CD8-positive, alpha-beta T cell (primary cell): ENCODE measurements at regions of chr1 and their contacts with region 1.

Region 1: DNA sequence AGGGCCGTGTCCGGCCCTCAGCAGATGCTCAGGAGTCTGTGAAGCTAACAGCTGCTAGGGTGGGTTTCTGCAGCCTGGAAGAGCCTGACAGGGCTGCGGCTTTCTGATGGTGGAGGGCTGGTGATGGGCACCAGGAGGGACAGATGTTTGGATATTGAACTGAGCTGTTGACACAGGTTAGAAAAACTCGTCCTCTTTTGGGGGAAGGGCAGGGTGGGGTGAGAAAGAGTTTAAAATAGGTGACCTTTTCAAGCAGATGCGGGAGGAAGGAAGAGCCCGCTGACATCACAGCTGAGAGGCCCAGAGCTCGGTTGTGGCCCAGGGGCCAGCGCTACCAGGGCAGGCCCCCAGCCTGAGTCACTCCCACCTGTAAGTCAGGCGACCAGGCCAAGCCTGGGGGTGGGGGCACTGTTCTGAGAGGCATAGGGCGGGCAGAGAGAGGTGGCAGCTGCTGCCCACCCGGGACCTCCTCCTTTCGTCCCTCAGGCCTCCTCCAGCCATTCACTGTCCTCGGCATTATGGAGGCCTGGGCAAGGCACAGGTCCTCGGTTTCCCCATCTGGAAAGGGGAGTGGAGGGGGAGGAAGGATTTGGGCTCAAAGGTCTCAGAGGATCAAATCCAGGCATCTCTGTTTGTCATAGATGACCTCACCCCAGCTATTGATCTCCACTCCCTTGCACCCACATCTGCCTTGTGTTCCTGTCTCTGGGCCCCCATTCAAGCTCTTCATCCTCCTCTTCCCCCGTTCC is 32.3 kb upstream of the ID3 start:
- DNase-seq: peak in 5 of 9 experiments; percentile 34 to 63 (median 46)
- ATAC-seq: peak; percentile 82
- H3K4me3 ChIP-seq: no peak overlapping the region
- H3K4me3 Mint-ChIP-seq: peak overlapping the region; percentile 42
- H3K27ac ChIP-seq: peak overlapping the region in 1 of 2 experiments; percentile 41
- H3K27ac Mint-ChIP-seq: peak overlapping the region; percentile 83
- H3K4me1 ChIP-seq: peaks cover 62% of the 10 kb centered on the region
- H3K4me1 Mint-ChIP-seq: peaks cover 64% of the 10 kb centered on the region
- H3K27me3 ChIP-seq: no peaks in the 10 kb centered on the region
- H3K27me3 Mint-ChIP-seq: no peaks in the 10 kb centered on the region
- CTCF ChIP-seq: no peak

Region 2: GRCh38 chr1:23577056-23578004 is 14.3 kb before region 1 on chr1:
- CTCF ChIA-PET with region 1: interaction called, 4 read pairs
- POLR2A ChIA-PET with region 1: interaction called, 20 read pairs
- intact Hi-C with region 1: loop called in 1 of 2 experiments (anchors 2 kb)
- DNase-seq: no peak
- ATAC-seq: peak; percentile 74
- H3K4me3 ChIP-seq: no peak overlapping the region
- H3K4me3 Mint-ChIP-seq: peak overlapping the region; percentile 50
- H3K27ac ChIP-seq: peak overlapping the region; percentile 7 to 10
- H3K27ac Mint-ChIP-seq: peak overlapping the region; percentile 87
- H3K4me1 ChIP-seq: peaks cover 60% of the 10 kb centered on the region
- H3K4me1 Mint-ChIP-seq: peaks cover 62% of the 10 kb centered on the region
- H3K27me3 ChIP-seq: no peaks in the 10 kb centered on the region
- H3K27me3 Mint-ChIP-seq: no peaks in the 10 kb centered on the region
- CTCF ChIP-seq: no peak

Region 3: GRCh38 chr1:23613191-23614031 is 21.8 kb after region 1 on chr1:
- CTCF ChIA-PET with region 1: no interaction called
- POLR2A ChIA-PET with region 1: interaction called, 86 read pairs
- intact Hi-C with region 1: no loop called
- DNase-seq: peak in 7 of 9 experiments; percentile 33 to 78 (median 61)
- ATAC-seq: peak; percentile 61
- H3K4me3 ChIP-seq: peak overlapping the region in 1 of 2 experiments; percentile 8
- H3K4me3 Mint-ChIP-seq: peak overlapping the region; percentile 54
- H3K27ac ChIP-seq: peak overlapping the region; percentile 40 to 72
- H3K27ac Mint-ChIP-seq: peak overlapping the region; percentile 90
- H3K4me1 ChIP-seq: peaks cover 65% of the 10 kb centered on the region
- H3K4me1 Mint-ChIP-seq: peaks cover 83% of the 10 kb centered on the region
- H3K27me3 ChIP-seq: no peaks in the 10 kb centered on the region
- H3K27me3 Mint-ChIP-seq: no peaks in the 10 kb centered on the region
- CTCF ChIP-seq: no peak

Region 4: GRCh38 chr1:23619299-23620188 is 27.9 kb after region 1 on chr1:
- CTCF ChIA-PET with region 1: no interaction called
- POLR2A ChIA-PET with region 1: interaction called, 86 read pairs
- intact Hi-C with region 1: no loop called
- DNase-seq: peak; percentile 66 to 92 (median 85)
- ATAC-seq: peak; percentile 84
- H3K4me3 ChIP-seq: peak overlapping the region; percentile 44 to 50
- H3K4me3 Mint-ChIP-seq: peak overlapping the region; percentile 72
- H3K27ac ChIP-seq: peak overlapping the region; percentile 62 to 68
- H3K27ac Mint-ChIP-seq: peak overlapping the region; percentile 95
- H3K4me1 ChIP-seq: peaks cover 80% of the 10 kb centered on the region
- H3K4me1 Mint-ChIP-seq: peaks cover 89% of the 10 kb centered on the region
- H3K27me3 ChIP-seq: no peaks in the 10 kb centered on the region
- H3K27me3 Mint-ChIP-seq: no peaks in the 10 kb centered on the region
- CTCF ChIP-seq: no peak

Region 5: DNA sequence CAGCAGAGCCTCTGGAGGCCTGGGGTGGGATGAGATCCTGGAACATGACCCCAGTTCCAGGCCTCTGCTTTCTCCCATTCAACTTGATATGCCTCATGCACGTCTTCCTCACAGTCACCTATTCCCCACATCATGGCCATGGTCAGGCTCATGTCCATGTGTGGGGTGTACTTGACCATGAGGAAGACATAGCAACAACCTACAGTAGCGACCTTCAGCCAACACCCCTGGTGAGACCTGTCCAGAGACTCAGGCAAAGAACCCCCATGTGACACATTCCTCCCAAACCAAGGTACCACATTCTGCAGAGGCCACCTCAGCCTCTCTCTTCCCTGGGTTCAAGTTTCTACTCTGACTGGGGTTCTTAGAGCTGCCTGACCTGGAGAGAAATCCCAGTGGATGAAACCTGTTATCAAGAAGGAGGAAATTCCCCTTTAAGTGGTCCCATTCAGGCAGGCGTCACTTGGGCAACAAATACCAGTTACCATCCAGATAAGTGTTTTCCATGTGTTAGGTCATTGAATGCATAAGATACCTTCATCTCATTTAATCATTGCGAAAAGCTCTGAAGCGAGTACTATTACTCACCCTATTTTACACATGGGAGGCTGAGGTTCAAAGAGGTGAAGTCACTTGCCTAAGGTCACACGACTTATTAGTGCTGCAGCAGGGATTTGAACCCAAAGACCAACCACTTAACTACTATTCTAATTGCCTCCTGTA is 54.3 kb after region 1 on chr1:
- CTCF ChIA-PET with region 1: no interaction called
- POLR2A ChIA-PET with region 1: no interaction called
- intact Hi-C with region 1: no loop called
- DNase-seq: no peak
- ATAC-seq: no peak
- H3K4me3 ChIP-seq: no peak overlapping the region
- H3K4me3 Mint-ChIP-seq: no peak overlapping the region
- H3K27ac ChIP-seq: no peak overlapping the region
- H3K27ac Mint-ChIP-seq: no peak overlapping the region
- H3K4me1 ChIP-seq: no peaks in the 10 kb centered on the region
- H3K4me1 Mint-ChIP-seq: no peaks in the 10 kb centered on the region
- H3K27me3 ChIP-seq: no peaks in the 10 kb centered on the region
- H3K27me3 Mint-ChIP-seq: peaks cover under 1% of the 10 kb centered on the region
- CTCF ChIP-seq: no peak

Region 6: GRCh38 chr1:24463776-24464735 is 872.4 kb after region 1 on chr1:
- CTCF ChIA-PET with region 1: no interaction called
- POLR2A ChIA-PET with region 1: no interaction called
- intact Hi-C with region 1: loop called in 1 of 2 experiments (anchors 5 kb)
- DNase-seq: no peak
- ATAC-seq: no peak
- H3K4me3 ChIP-seq: no peak overlapping the region
- H3K4me3 Mint-ChIP-seq: peak overlapping the region; percentile 49
- H3K27ac ChIP-seq: peak overlapping the region in 1 of 2 experiments; percentile 10
- H3K27ac Mint-ChIP-seq: peak overlapping the region; percentile 89
- H3K4me1 ChIP-seq: peaks cover 14% of the 10 kb centered on the region
- H3K4me1 Mint-ChIP-seq: peaks cover 23% of the 10 kb centered on the region
- H3K27me3 ChIP-seq: no peaks in the 10 kb centered on the region
- H3K27me3 Mint-ChIP-seq: no peaks in the 10 kb centered on the region
- CTCF ChIP-seq: no peak